Naive thymus-derived CD4-positive, alpha-beta T cell (primary cell): ENCODE measurements at regions of chr13 and their contacts with region 1.

Region 1: DNA sequence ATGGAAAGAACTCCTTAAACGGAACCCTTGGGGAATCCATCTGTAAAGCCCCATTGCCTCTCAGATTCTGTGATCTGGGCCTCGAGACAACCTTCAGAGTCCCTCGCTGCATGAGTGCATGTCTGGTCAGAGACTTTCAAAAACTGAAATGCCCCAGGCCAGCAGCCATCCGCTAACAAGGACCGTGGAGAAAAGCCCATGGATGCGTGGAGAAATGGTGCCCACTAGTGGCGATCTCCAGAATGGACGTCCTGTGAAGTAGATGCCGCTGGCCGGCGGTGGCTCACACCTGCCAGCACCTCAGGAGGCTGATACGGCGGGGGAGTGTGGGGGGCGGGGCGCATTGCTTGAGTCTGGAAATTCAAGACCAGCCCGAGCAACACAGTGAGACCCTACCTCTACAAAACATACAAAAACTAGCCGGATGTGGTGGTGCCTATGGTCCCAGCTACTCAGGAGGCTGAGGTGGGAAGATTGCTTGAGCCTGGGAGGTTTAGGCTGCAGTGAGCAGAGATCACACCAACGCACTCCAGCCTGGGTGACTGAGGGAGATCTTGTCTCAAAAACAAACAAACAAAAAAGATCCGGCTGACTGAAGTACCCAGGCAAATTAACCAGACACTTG is 7.9 kb upstream of the CDC16 start:
- DNase-seq: peak; percentile 67 to 82 (median 73)
- ATAC-seq: peak; percentile 92
- H3K4me3 ChIP-seq: no peak overlapping the region
- H3K4me3 Mint-ChIP-seq: peak overlapping the region; percentile 35 to 74 (median 54)
- H3K27ac ChIP-seq: peak overlapping the region; percentile 47
- H3K27ac Mint-ChIP-seq: peak overlapping the region in 8 of 9 donors; percentile 84 to 95 (median 91)
- H3K4me1 ChIP-seq: peaks cover 17 to 40% of the 10 kb centered on the region in 2 donors
- H3K4me1 Mint-ChIP-seq: peaks cover 37 to 50% (median 43%) of the 10 kb centered on the region in 7 donors
- H3K27me3 ChIP-seq: no peaks in the 10 kb centered on the region
- H3K27me3 Mint-ChIP-seq: peaks cover 0 to 34% (median 4%) of the 10 kb centered on the region in 5 donors

Region 2: GRCh38 chr13:113951246-113951999 is 275.4 kb before region 1 on chr13:
- CTCF ChIA-PET with region 1: no interaction called
- POLR2A ChIA-PET with region 1: no interaction called
- intact Hi-C with region 1: loop called (anchors 1 kb)
- DNase-seq: peak in 8 of 9 donors; percentile 25 to 56 (median 44)
- ATAC-seq: peak; percentile 75
- H3K4me3 ChIP-seq: no peak overlapping the region
- H3K4me3 Mint-ChIP-seq: peak overlapping the region in 2 of 10 donors; percentile 34 to 45
- H3K27ac ChIP-seq: no peak overlapping the region
- H3K27ac Mint-ChIP-seq: peak overlapping the region in 1 of 9 donors; percentile 19
- H3K4me1 ChIP-seq: no peaks in the 10 kb centered on the region
- H3K4me1 Mint-ChIP-seq: peaks cover 5 to 21% (median 11%) of the 10 kb centered on the region in 7 donors
- H3K27me3 ChIP-seq: no peaks in the 10 kb centered on the region
- H3K27me3 Mint-ChIP-seq: no peaks in the 10 kb centered on the region

Region 3: GRCh38 chr13:114017028-114017630 is 209.7 kb before region 1 on chr13:
- CTCF ChIA-PET with region 1: no interaction called
- POLR2A ChIA-PET with region 1: no interaction called
- intact Hi-C with region 1: no loop called
- DNase-seq: no peak
- ATAC-seq: no peak
- H3K4me3 ChIP-seq: no peak overlapping the region
- H3K4me3 Mint-ChIP-seq: peak overlapping the region in 2 of 10 donors; percentile 14 to 21
- H3K27ac ChIP-seq: no peak overlapping the region
- H3K27ac Mint-ChIP-seq: peak overlapping the region in 5 of 9 donors; percentile 1 to 73 (median 53)
- H3K4me1 ChIP-seq: no peaks in the 10 kb centered on the region
- H3K4me1 Mint-ChIP-seq: no peaks in the 10 kb centered on the region
- H3K27me3 ChIP-seq: no peaks in the 10 kb centered on the region
- H3K27me3 Mint-ChIP-seq: no peaks in the 10 kb centered on the region

Region 4: DNA sequence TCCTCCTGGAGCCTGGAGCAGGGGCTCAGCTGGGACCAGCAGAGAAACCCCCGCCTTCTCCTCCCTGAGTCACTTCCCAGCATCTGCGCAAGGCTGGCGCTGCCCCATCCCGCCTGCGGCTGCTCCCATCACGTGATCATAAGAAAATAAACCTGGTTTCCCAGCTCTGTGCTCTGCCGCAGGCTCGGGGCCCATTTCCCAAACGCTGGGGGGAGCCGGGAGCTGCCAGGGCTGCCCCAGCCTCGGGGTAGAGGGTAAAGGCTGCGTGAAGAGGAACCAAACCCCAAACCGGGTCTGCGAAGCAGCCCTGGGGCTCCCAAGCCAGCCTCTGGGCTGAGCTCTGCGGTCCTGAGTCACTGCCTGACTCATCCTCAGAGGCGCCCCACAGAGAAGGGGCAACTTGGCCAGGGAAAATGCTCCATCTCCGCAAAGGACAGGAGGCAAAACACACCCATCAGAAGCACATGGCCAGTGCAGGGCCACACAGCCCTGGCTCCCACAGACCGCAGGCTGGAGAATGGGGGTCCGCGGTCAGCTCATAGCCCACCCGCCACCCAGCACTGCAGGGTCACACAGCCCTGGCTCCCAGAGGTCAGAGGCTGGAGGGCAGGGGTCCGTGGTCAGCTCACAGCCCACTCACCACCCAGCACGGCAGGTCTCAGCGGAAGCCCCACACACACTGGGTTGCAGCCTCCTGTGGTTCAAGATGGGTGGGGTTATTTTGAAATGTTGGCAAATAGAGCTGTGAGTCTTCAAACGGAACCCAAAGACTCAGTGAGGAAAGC is 161.5 kb before region 1 on chr13:
- CTCF ChIA-PET with region 1: no interaction called
- POLR2A ChIA-PET with region 1: interaction called, 3 read pairs
- intact Hi-C with region 1: loop called (anchors 1 kb)
- DNase-seq: peak; percentile 42 to 74 (median 63)
- ATAC-seq: peak; percentile 77
- H3K4me3 ChIP-seq: peak overlapping the region; percentile 66
- H3K4me3 Mint-ChIP-seq: peak overlapping the region; percentile 78 to 89 (median 86)
- H3K27ac ChIP-seq: peak overlapping the region; percentile 76
- H3K27ac Mint-ChIP-seq: peak overlapping the region; percentile 86 to 99 (median 92)
- H3K4me1 ChIP-seq: peaks cover 51 to 60% of the 10 kb centered on the region in 2 donors
- H3K4me1 Mint-ChIP-seq: peaks cover 51 to 72% (median 62%) of the 10 kb centered on the region in 7 donors
- H3K27me3 ChIP-seq: no peaks in the 10 kb centered on the region
- H3K27me3 Mint-ChIP-seq: no peaks in the 10 kb centered on the region

Region 5: DNA sequence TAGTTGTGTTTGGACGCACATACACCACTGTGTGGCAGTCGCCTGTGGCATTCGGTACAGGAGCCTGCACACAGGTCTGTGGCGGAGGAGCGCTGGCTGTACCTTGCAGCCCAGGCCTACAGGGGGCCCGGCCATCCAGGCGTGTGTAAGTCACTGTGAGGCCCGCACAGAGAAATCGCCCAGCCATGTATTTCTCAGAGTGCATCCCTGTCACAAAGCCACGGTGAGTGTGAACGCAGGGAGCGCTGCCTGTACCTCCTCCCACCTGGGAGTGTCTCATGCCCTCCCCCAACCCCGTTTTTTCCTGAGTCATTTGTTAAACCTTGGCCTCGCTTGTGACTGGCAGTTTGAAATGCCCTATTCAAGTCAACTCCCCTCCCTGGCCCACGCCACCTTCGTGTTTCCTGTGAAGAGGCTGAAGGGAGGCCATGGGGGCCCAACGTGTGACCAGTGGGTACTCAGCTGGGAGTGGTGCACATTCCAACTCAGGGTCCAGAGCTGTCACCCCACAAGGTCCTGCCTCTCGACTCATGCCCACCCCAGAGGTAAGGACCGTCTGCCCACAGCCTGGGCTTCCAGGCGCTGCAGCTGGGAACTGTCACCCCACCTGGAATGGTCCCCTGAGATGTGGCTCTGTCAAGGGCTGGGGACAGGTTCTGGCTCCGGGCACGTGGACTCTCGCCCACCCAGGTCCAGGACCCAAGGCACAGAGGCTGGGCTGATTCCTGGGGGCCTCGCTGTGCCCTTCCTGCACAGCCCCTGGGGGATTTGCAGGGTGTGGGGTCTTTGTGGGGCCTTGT is 82.8 kb before region 1 on chr13:
- CTCF ChIA-PET with region 1: interaction called, 13 read pairs
- POLR2A ChIA-PET with region 1: interaction called, 29 read pairs
- intact Hi-C with region 1: loop called (anchors 1 to 2 kb)
- DNase-seq: peak in 3 of 9 donors; percentile 48 to 57 (median 56)
- ATAC-seq: no peak
- H3K4me3 ChIP-seq: peak overlapping the region; percentile 18
- H3K4me3 Mint-ChIP-seq: peak overlapping the region in 5 of 10 donors; percentile 48 to 67 (median 51)
- H3K27ac ChIP-seq: peak overlapping the region; percentile 74
- H3K27ac Mint-ChIP-seq: no peak overlapping the region
- H3K4me1 ChIP-seq: peaks cover 76 to 84% of the 10 kb centered on the region in 2 donors
- H3K4me1 Mint-ChIP-seq: peaks cover 31 to 48% (median 42%) of the 10 kb centered on the region in 7 donors
- H3K27me3 ChIP-seq: no peaks in the 10 kb centered on the region
- H3K27me3 Mint-ChIP-seq: peaks cover 0 to 12% (median 0%) of the 10 kb centered on the region in 5 donors

Region 6: DNA sequence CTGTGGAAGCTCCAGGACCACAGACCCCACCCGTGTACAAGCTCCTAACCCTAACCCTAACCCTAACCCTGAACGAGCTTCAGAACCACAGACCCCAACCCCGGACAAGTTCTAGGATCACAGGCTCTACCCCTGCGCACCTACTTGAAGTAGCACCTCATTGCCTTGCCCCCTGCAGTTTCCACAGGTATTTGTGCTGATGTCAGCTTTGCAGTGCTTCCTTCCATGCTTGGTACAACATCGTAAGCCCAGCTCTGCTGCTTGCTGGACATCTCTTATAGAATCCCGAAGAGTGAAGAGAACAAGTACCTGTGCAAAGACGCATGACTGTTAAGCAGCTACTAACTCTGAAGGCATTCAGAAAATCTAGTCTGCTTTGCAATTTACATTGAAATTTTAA is 12.8 kb before region 1 on chr13:
- CTCF ChIA-PET with region 1: no interaction called
- POLR2A ChIA-PET with region 1: interaction called, 12 read pairs
- intact Hi-C with region 1: no loop called
- DNase-seq: no peak
- ATAC-seq: no peak
- H3K4me3 ChIP-seq: no peak overlapping the region
- H3K4me3 Mint-ChIP-seq: no peak overlapping the region
- H3K27ac ChIP-seq: no peak overlapping the region
- H3K27ac Mint-ChIP-seq: peak overlapping the region in 4 of 9 donors; percentile 22 to 67 (median 38)
- H3K4me1 ChIP-seq: peaks cover 0 to 1% of the 10 kb centered on the region in 2 donors
- H3K4me1 Mint-ChIP-seq: peaks cover 3 to 53% (median 42%) of the 10 kb centered on the region in 7 donors
- H3K27me3 ChIP-seq: no peaks in the 10 kb centered on the region
- H3K27me3 Mint-ChIP-seq: peaks cover 0 to 61% (median 0%) of the 10 kb centered on the region in 5 donors